CD4-positive, alpha-beta memory T cell (primary cell): ENCODE measurements at regions of chr17 and their contacts with region 1.

Region 1: GRCh38 chr17:4004517-4005295 is 40.5 kb upstream of the ATP2A3 start:
- DNase-seq: peak in 4 of 5 donors; percentile 52 to 65 (median 56)
- H3K4me3 ChIP-seq: no peak overlapping the region
- H3K4me3 Mint-ChIP-seq: peak overlapping the region in 1 of 8 donors; percentile 34
- H3K27ac ChIP-seq: no peak overlapping the region
- H3K27ac Mint-ChIP-seq: peak overlapping the region in 5 of 7 donors; percentile 42 to 79 (median 57)
- H3K4me1 ChIP-seq: peaks cover 8% of the 10 kb centered on the region
- H3K4me1 Mint-ChIP-seq: peaks cover 0 to 14% (median 4%) of the 10 kb centered on the region in 4 donors
- H3K27me3 ChIP-seq: no peaks in the 10 kb centered on the region
- H3K27me3 Mint-ChIP-seq: no peaks in the 10 kb centered on the region

Region 2: DNA sequence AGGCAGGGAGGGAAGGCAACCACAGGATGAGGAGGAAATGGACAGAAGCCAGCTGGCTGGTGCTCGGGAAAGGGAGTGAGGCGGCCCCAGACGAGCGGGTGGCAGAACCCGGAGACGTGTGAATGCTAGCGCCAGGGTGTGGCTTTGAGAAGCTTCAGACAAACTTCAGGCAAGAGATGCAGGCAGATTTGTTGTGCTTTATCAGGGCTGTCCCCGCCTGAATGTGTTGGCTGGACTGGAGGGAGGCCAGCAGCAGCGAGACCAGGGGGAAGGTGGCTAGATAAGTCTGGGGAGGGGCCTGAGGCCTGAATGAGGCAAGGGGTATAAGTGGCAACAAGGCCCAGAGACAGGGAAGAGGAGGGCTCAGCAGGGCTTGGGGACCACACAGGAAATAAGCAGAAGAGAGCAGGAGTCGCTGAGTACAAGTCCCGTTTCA is 133.8 kb before region 1 on chr17:
- CTCF ChIA-PET with region 1: no interaction called
- POLR2A ChIA-PET with region 1: no interaction called
- intact Hi-C with region 1: no loop called
- DNase-seq: no peak
- H3K4me3 ChIP-seq: no peak overlapping the region
- H3K4me3 Mint-ChIP-seq: peak overlapping the region in 2 of 8 donors; percentile 20 to 39
- H3K27ac ChIP-seq: no peak overlapping the region
- H3K27ac Mint-ChIP-seq: peak overlapping the region in 4 of 7 donors; percentile 22 to 87 (median 63)
- H3K4me1 ChIP-seq: no peaks in the 10 kb centered on the region
- H3K4me1 Mint-ChIP-seq: no peaks in the 10 kb centered on the region
- H3K27me3 ChIP-seq: no peaks in the 10 kb centered on the region
- H3K27me3 Mint-ChIP-seq: no peaks in the 10 kb centered on the region

Region 3: DNA sequence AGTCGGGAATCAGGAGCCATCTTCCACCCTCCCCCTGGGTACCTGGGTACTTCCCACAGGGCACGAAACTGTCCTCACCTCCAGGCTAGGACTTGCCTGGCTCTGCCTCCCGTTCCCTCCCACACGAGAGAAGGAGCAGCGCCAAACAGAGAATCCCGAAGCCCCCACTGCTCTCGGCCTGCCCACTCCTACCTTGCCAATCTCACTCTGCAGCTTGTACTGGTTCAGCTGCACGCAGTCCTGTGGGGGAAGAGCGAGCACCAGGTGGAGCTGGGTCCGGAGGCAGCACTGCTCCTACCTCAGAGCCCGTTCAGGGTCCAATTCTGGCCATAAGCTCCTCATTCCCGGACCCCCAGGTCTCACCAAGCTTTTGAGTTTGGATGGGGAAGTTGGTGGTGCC is 120.5 kb before region 1 on chr17:
- CTCF ChIA-PET with region 1: no interaction called
- POLR2A ChIA-PET with region 1: no interaction called
- intact Hi-C with region 1: no loop called
- DNase-seq: no peak
- H3K4me3 ChIP-seq: no peak overlapping the region
- H3K4me3 Mint-ChIP-seq: no peak overlapping the region
- H3K27ac ChIP-seq: no peak overlapping the region
- H3K27ac Mint-ChIP-seq: no peak overlapping the region
- H3K4me1 ChIP-seq: peaks cover 22% of the 10 kb centered on the region
- H3K4me1 Mint-ChIP-seq: peaks cover 11 to 36% (median 21%) of the 10 kb centered on the region in 4 donors
- H3K27me3 ChIP-seq: no peaks in the 10 kb centered on the region
- H3K27me3 Mint-ChIP-seq: no peaks in the 10 kb centered on the region

Region 4: DNA sequence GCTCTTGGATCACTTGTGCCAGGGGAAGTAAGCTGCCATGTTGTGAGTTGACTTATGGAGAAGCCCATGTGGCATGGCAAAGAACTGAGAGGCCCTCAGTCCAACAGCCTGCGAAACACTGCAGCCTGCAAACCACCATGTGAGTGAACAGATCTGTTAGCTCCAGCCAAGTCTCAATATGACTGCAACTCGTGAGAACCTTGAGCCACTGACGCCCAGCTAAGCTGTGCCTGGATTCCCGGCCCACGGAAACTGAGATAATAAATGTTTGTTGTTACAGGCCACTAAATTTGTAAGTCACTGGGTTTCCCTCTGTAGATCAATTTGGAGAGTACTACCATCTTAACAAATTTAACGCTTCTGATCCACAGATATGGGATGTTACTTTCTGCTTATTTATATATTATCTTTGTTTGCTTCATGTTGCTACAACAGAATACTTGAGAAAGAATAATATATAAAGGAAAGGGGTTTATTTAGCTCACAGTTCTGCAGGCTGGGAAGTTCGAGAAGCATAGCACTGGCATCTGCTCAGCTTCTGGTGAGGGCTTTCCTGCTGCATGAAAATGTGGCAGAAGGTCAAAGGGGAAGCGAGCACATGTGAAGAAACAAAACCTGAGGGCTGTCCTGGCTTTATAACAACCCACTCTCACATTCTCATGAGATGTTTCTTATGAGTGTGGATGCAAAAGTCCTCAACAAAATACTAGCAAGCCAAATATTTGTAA is 11.0 kb before region 1 on chr17:
- CTCF ChIA-PET with region 1: interaction called, 10 read pairs
- POLR2A ChIA-PET with region 1: no interaction called
- intact Hi-C with region 1: no loop called
- DNase-seq: no peak
- H3K4me3 ChIP-seq: no peak overlapping the region
- H3K4me3 Mint-ChIP-seq: no peak overlapping the region
- H3K27ac ChIP-seq: no peak overlapping the region
- H3K27ac Mint-ChIP-seq: no peak overlapping the region
- H3K4me1 ChIP-seq: no peaks in the 10 kb centered on the region
- H3K4me1 Mint-ChIP-seq: peaks cover 0 to 2% (median 0%) of the 10 kb centered on the region in 4 donors
- H3K27me3 ChIP-seq: no peaks in the 10 kb centered on the region
- H3K27me3 Mint-ChIP-seq: peaks cover 4 to 11% of the 10 kb centered on the region in 2 donors

Region 5: DNA sequence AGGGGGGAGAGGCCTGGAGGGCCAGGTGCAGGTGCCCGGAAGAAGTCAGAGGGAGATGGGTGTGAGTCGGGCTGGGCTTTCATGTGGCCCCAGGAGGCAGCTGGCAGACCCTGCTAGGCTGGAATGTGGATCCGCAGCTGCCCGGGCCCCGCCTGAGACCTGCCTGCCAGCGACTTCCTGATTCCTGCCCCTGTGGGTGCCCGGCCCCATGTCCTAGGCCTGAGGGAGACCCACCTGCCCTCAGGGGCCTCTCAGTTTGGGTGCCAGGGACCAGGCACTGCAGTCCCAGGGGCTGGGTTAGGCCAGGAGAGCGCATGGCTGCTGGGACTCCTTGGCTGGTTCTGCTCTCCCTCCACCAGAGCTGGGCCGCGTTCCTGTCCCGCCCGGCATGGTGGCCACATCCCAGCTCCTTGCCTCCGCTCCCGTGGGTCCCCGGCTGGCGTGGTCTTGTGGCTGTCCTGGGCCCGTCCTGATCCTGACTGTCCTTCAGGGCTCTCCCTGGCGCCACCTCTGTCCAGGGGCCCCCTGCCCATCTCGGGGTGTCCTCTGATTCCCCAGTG is 471.9 kb after region 1 on chr17:
- CTCF ChIA-PET with region 1: no interaction called
- POLR2A ChIA-PET with region 1: no interaction called
- intact Hi-C with region 1: no loop called
- DNase-seq: no peak
- H3K4me3 ChIP-seq: no peak overlapping the region
- H3K4me3 Mint-ChIP-seq: no peak overlapping the region
- H3K27ac ChIP-seq: no peak overlapping the region
- H3K27ac Mint-ChIP-seq: no peak overlapping the region
- H3K4me1 ChIP-seq: peaks cover 14% of the 10 kb centered on the region
- H3K4me1 Mint-ChIP-seq: peaks cover 10 to 19% (median 15%) of the 10 kb centered on the region in 4 donors
- H3K27me3 ChIP-seq: no peaks in the 10 kb centered on the region
- H3K27me3 Mint-ChIP-seq: no peaks in the 10 kb centered on the region